Heart left ventricle (tissue), 16 donors: ENCODE measurements at regions of chr9 and their contacts with region 1.

Region 1: GRCh38 chr9:78400496-78400895 is 103.6 kb downstream of the PSAT1 start:
- DNase-seq: no peak
- ATAC-seq: no peak
- H3K4me3 ChIP-seq: no peak overlapping the region
- H3K27ac ChIP-seq: no peak overlapping the region
- H3K4me1 ChIP-seq: no peaks in the 10 kb centered on the region
- H3K27me3 ChIP-seq: peaks cover 0 to 17% (median 0%) of the 10 kb centered on the region in 9 donors
- CTCF ChIP-seq: no peak
- POLR2A ChIP-seq: no peak

Region 2: DNA sequence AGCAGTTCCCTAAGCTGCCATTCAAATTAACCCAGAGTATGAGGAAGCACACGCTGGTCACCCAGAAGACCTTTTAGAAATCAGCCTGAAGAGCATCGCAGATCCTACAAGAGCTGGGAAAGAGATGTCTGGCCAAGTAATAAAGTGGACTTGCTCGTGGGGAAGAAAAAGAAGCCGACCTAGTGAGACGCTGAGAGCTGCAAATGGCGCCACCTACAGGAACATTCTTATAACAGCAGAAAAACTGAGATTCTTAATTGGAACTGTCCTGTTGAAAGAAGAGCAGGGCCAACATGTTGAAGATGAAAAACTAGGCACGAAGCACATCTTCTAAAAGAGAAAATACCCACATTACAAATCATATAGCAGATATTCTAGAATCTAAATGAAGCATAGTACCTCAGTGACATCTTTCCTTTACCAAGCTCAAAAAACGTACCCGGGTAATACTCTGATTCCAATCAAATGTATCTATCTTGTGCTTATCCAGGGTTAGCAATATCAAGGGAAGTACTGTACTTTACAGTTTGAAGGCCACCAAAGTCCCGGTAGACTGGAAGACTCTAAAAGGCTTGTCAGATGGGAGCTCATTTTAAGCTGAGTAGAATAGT is 365.0 kb before region 1 on chr9:
- intact Hi-C with region 1: no loop called
- DNase-seq: peak in 4 of 5 donors; percentile 31 to 66 (median 50)
- ATAC-seq: peak in 3 of 4 donors; percentile 8 to 37 (median 32)
- H3K4me3 ChIP-seq: peak overlapping the region in 1 of 12 donors; percentile 15
- H3K27ac ChIP-seq: peak overlapping the region in 7 of 12 donors; percentile 6 to 44 (median 31)
- H3K4me1 ChIP-seq: peaks cover 0 to 33% (median 8%) of the 10 kb centered on the region in 12 donors
- H3K27me3 ChIP-seq: peaks cover 0 to 8% (median 0%) of the 10 kb centered on the region in 9 donors
- CTCF ChIP-seq: peak; percentile 67 to 93 (median 80)
- POLR2A ChIP-seq: no peak

Region 3: GRCh38 chr9:78115073-78115472 is 285.4 kb before region 1 on chr9:
- intact Hi-C with region 1: no loop called
- DNase-seq: no peak
- ATAC-seq: no peak
- H3K4me3 ChIP-seq: no peak overlapping the region
- H3K27ac ChIP-seq: no peak overlapping the region
- H3K4me1 ChIP-seq: peaks cover 0 to 10% (median 0%) of the 10 kb centered on the region in 12 donors
- H3K27me3 ChIP-seq: no peaks in the 10 kb centered on the region
- CTCF ChIP-seq: peak in 1 of 12 donors; percentile 38
- POLR2A ChIP-seq: no peak

Region 4: GRCh38 chr9:78453450-78453849 is 53.0 kb after region 1 on chr9:
- intact Hi-C with region 1: loop called in 1 of 10 experiments (anchors 5 kb)
- DNase-seq: no peak
- ATAC-seq: no peak
- H3K4me3 ChIP-seq: no peak overlapping the region
- H3K27ac ChIP-seq: no peak overlapping the region
- H3K4me1 ChIP-seq: no peaks in the 10 kb centered on the region
- H3K27me3 ChIP-seq: no peaks in the 10 kb centered on the region
- CTCF ChIP-seq: no peak
- POLR2A ChIP-seq: no peak